Head of caudate nucleus (tissue), 42 donors: ENCODE measurements at regions of chr19 and their contacts with region 1.

Region 1: GRCh38 chr19:46728693-46729676 is 12.1 kb upstream of the PRKD2 start:
- DNase-seq: peak in 41 of 42 donors; percentile 56 to 90 (median 78)

Region 2: GRCh38 chr19:46614114-46614722 is 114.8 kb before region 1 on chr19:
- intact Hi-C with region 1: loop called (anchors 5 kb)
- DNase-seq: peak; percentile 71 to 97 (median 90)